Head of caudate nucleus (tissue), 42 donors: ENCODE measurements at regions of chr19 and their contacts with region 1.

Region 1: DNA sequence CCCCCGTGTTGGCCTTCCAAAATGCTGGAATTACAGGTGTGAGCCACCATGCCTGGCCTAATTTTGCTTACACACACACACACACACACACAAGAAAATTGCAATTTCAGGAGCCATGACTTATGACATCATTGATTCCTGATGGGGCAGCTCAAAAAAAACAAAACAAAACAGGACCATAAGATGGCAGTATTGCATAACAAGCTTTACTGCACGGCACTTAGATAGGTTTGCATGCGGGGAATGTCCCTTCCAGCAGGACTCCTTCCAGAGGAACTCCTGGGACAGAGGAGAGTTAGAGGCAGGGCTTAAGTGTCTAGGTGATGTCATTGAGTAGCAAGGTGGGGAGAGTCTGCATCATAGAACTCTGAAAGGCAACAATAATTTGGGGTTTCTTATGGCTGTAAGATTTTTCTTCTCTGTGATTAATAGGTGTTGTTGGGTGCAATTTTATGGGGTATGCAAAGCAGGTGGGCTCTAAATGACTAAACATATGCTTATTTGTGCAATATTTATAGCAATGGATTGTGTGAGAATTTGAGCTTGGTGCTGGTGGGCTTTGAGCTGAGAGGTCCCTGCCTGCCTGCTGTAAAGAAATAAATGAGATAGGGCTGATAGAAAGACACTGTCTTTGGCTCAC is 9.0 kb upstream of the ACSBG2 start:
- DNase-seq: no peak

Region 2: DNA sequence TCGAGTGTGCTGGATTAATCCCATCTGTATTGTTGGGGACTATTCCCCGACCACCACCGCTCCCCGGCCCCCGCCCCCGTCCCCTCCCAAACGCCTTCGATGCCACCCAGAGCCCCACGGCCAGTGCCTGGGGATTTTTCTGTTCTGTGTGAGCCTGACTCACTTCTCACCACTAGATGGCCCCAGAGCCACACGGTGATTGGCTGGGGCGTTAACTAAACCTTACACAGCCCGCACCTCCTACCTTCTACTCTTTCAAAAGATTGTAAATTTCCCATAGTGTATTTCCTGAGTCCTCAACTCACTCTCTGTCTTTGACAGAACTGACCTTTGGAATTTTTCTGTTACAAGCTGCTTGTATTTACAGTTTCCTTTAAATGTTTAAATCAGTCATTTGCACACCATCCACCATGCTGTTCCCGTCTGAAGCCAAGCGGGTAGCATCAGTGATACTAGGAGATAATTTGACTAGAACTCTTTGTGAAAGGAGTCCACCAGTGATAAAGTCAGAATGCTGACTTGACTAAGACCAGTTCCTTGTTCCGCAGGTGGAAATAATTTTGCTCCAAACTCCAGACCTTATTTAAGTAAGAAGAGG is 77.5 kb before region 1 on chr19:
- intact Hi-C with region 1: loop called (anchors 2 kb)
- DNase-seq: peak; percentile 51 to 90 (median 76)